Heart left ventricle (tissue), 16 donors: ENCODE measurements at regions of chr5 and their contacts with region 1.

Region 1: GRCh38 chr5:1523771-1524480 is at the start of gene LPCAT1:
- DNase-seq: peak; percentile 84 to 92 (median 87)
- ATAC-seq: peak; percentile 67 to 95 (median 92)
- H3K4me3 ChIP-seq: peak within 1 kb of the TSS; percentile 63 to 99 (median 80)
- H3K27ac ChIP-seq: peak within 1 kb of the TSS; percentile 78 to 97 (median 94)
- H3K4me1 ChIP-seq: peaks cover 0 to 29% (median 17%) of the 10 kb centered on the region in 12 donors
- H3K27me3 ChIP-seq: no peaks in the 10 kb centered on the region
- CTCF ChIP-seq: peak in 10 of 12 donors; percentile 7 to 46 (median 28)
- POLR2A ChIP-seq: peak in 1 of 2 donors; percentile 38
- total RNA-seq, gene LPCAT1: 8.2 to 30.6 (median 9.9) TPM

Region 2: DNA sequence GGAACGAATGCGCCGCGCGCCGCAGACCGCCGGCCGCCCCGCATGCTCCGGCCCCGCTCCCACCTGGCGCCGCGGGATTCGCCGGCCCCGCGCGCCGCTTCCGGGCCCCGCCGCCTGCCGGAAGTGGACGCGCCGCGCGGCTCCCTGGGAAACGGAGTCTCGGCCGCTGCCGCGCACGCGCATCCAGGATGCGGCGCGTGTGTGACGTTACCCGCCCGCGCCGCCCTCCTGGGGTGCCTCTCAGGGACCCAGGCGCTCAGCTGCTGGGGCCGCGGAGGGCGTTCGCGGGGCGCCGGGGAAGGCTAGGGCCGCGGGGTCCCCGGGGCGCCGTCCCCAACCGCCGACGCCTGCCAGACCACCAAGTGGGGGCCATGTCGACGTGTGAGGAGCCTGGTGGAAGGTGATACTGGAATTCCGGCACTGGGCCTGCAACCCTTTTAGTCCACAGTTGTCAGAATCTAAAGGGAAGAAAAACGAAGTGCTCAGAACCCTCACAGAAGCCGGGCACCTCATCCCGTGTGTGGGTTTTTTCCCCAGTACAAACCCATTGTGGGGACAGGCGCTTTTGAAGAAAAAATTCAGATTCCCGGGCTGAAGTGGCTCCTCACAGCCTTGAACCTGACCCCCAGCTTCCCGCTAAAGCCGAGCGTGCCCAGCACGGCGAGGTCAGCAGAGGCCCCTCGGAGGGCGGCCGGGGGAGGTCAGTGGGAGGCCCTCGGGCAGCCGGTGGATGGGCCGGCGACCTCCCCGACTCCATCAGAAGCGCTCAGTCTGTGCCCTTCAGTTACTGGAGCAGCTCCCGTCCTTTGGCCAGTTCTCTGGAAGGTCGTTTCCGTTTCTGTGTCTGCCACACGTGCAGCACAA is 178.7 kb before region 1 on chr5 and contains the start of gene CLPTM1L:
- intact Hi-C with region 1: loop called in 1 of 10 experiments (anchors 2 kb)
- DNase-seq: peak; percentile 86 to 93 (median 89)
- ATAC-seq: peak; percentile 83 to 98 (median 96)
- H3K4me3 ChIP-seq: peak within 1 kb of the TSS; percentile 78 to 100 (median 94)
- H3K27ac ChIP-seq: peak within 1 kb of the TSS; percentile 54 to 94 (median 91)
- H3K4me1 ChIP-seq: peaks cover 0 to 25% (median 20%) of the 10 kb centered on the region in 12 donors
- H3K27me3 ChIP-seq: no peaks in the 10 kb centered on the region
- CTCF ChIP-seq: no peak
- POLR2A ChIP-seq: peak; percentile 50 to 88
- total RNA-seq, gene CLPTM1L: 31.0 to 60.2 (median 39.4) TPM

Region 3: GRCh38 chr5:1437226-1437851 is 86.6 kb before region 1 on chr5:
- intact Hi-C with region 1: no loop called
- DNase-seq: no peak
- ATAC-seq: no peak
- H3K4me3 ChIP-seq: no peak overlapping the region
- H3K27ac ChIP-seq: no peak overlapping the region
- H3K4me1 ChIP-seq: no peaks in the 10 kb centered on the region
- H3K27me3 ChIP-seq: peaks cover 5 to 41% (median 14%) of the 10 kb centered on the region in 9 donors
- CTCF ChIP-seq: no peak
- POLR2A ChIP-seq: no peak

Region 4: GRCh38 chr5:1633605-1634336 is 109.8 kb after region 1 on chr5:
- intact Hi-C with region 1: loop called in 1 of 10 experiments (anchors 5 kb)
- DNase-seq: peak; percentile 85 to 91 (median 88)
- ATAC-seq: peak; percentile 94 to 99 (median 98)
- H3K4me3 ChIP-seq: peak overlapping the region; percentile 54 to 94 (median 76)
- H3K27ac ChIP-seq: peak overlapping the region; percentile 36 to 92 (median 84)
- H3K4me1 ChIP-seq: peaks cover 0 to 8% (median 0%) of the 10 kb centered on the region in 12 donors
- H3K27me3 ChIP-seq: peaks cover 0 to 3% (median 0%) of the 10 kb centered on the region in 9 donors
- CTCF ChIP-seq: no peak
- POLR2A ChIP-seq: peak in 1 of 2 donors; percentile 78

Region 5: GRCh38 chr5:1652596-1653345 is 128.8 kb after region 1 on chr5:
- intact Hi-C with region 1: no loop called
- DNase-seq: peak in 2 of 5 donors; percentile 14 to 47
- ATAC-seq: peak in 2 of 4 donors; percentile 25 to 29
- H3K4me3 ChIP-seq: no peak overlapping the region
- H3K27ac ChIP-seq: no peak overlapping the region
- H3K4me1 ChIP-seq: peaks cover 0 to 10% (median 4%) of the 10 kb centered on the region in 12 donors
- H3K27me3 ChIP-seq: peaks cover 0 to 58% (median 23%) of the 10 kb centered on the region in 9 donors
- CTCF ChIP-seq: no peak
- POLR2A ChIP-seq: no peak